Caco-2 (cell line): ENCODE measurements at regions of chr17 and their contacts with region 1.

Region 1: DNA sequence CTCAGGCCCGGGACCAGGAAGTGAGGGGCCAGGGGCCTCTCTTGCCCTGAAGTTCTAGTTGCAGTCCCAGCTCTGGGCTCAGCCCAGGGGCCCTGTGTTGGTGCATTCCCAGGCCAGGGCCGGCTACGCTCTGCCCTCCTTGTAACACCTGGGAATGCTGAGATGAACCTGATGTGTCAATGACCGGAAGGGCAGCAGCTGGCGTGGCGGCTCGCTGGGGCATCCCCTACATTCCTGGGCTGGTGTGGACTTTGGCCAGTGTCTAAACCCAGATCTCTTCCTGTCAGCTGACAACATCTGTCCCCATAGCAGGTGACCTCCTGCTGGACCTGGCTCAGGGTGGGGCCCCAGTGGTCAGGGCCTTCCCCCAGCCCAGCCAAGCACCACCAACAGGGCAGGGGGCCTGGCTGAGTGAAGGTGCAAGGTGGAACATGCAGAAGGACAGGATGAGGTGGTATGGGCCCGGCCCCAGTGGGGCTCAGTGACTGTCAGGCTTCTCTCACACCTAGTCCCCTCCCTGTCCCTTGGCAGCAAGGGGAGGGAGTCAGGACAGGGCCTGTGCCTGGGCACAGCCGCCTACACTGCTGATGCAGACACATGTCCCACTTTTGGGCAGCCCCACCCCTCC is 15.9 kb downstream of the FAM83G start:
- DNase-seq: peak; percentile 84 to 89
- H3K4me3 ChIP-seq: no peak overlapping the region
- H3K4me3 Mint-ChIP-seq: no peak overlapping the region
- H3K27ac Mint-ChIP-seq: peak overlapping the region; percentile 80
- H3K4me1 ChIP-seq: peaks cover 37% of the 10 kb centered on the region
- H3K4me1 Mint-ChIP-seq: peaks cover 16% of the 10 kb centered on the region
- H3K27me3 ChIP-seq: no peaks in the 10 kb centered on the region
- H3K27me3 Mint-ChIP-seq: no peaks in the 10 kb centered on the region
- CTCF ChIP-seq: no peak

Region 2: DNA sequence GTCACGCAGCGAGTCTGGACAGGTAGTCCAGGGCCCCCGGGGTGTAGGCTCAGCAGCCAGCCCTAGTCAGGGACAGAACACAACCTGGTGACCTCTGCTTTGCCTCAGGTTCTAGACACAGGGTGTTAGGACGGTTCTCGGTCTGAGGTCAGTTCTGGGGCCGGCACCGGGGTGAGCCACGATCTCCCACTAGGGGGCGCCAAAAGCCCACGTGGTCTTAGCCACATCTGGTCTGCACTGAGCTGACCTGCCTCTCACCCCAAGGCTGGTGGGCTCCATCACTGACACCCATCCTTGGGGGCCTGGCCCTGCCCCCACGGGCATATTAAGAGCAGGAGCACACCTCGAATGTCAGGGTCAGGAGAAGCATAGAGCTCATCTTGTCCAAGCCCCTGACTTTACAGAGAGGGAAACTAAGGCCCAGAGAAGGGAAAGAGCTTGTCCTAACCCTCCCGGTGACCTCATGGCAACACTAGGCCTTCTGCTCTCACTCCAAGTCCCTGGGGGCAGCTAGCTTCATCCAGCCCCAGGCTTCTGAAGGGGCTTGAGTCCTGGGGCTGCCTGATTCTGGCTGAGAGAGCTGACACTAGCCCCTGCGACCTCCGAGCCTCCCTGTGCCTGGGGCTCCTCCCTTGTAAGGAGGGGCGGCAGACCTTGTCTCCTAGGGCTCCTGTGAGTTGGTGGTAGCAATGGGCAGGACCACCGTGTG is 27.7 kb before region 1 on chr17:
- CTCF ChIA-PET with region 1: interaction called, 11 read pairs
- POLR2A ChIA-PET with region 1: no interaction called
- intact Hi-C with region 1: loop called (anchors 2 kb)
- DNase-seq: peak; percentile 82 to 92
- H3K4me3 ChIP-seq: no peak overlapping the region
- H3K4me3 Mint-ChIP-seq: no peak overlapping the region
- H3K27ac Mint-ChIP-seq: no peak overlapping the region
- H3K4me1 ChIP-seq: peaks cover 20% of the 10 kb centered on the region
- H3K4me1 Mint-ChIP-seq: peaks cover 11% of the 10 kb centered on the region
- H3K27me3 ChIP-seq: no peaks in the 10 kb centered on the region
- H3K27me3 Mint-ChIP-seq: no peaks in the 10 kb centered on the region
- CTCF ChIP-seq: peak; percentile 96 to 97

Region 3: DNA sequence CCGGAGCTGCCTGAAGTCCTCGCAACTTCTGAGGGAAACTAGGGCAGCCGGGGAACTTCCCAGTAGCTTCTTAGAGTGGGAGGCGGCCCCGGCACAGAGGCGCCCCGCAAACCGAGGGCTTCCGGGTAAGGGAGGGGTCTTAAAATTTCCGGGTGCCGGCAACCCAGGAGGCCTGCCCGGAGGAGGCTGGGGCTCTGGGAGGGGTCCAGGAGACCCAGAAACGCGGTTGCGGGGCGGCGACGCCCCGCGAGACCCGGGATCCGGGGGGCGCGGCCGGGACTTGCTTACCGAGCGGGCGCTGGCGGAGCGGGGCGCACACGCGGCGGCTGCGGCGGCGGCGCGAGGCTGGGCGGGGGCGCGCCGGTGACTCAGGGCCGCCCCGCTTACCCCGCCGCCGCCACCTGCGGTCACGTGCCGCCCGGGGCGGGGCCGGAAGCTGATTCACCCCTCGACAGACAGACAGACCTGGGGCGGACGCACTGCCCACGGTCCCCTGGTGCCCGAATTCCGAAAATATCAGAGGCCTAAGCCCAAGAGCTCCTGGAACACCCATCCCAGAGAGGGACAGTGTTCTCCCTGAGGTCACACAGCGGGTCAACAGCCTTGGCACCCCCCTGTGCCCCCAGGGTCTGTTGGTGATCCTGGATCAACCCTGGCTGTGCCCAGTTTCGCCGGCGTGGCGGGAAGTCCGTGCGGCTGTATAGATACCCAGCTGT is 15.9 kb after region 1 on chr17 and contains the start of gene FAM83G:
- CTCF ChIA-PET with region 1: no interaction called
- POLR2A ChIA-PET with region 1: interaction called, 3 read pairs
- intact Hi-C with region 1: loop called (anchors 1 kb)
- DNase-seq: peak; percentile 82 to 89
- H3K4me3 ChIP-seq: peak within 1 kb of the TSS; percentile 93
- H3K4me3 Mint-ChIP-seq: peak within 1 kb of the TSS; percentile 75
- H3K27ac Mint-ChIP-seq: peak within 1 kb of the TSS; percentile 58
- H3K4me1 ChIP-seq: peaks cover 27% of the 10 kb centered on the region
- H3K4me1 Mint-ChIP-seq: peaks cover 7% of the 10 kb centered on the region
- H3K27me3 ChIP-seq: no peaks in the 10 kb centered on the region
- H3K27me3 Mint-ChIP-seq: no peaks in the 10 kb centered on the region
- CTCF ChIP-seq: no peak
- total RNA-seq, gene FAM83G: 24.3 and 28.1 TPM in 2 replicates

Region 4: DNA sequence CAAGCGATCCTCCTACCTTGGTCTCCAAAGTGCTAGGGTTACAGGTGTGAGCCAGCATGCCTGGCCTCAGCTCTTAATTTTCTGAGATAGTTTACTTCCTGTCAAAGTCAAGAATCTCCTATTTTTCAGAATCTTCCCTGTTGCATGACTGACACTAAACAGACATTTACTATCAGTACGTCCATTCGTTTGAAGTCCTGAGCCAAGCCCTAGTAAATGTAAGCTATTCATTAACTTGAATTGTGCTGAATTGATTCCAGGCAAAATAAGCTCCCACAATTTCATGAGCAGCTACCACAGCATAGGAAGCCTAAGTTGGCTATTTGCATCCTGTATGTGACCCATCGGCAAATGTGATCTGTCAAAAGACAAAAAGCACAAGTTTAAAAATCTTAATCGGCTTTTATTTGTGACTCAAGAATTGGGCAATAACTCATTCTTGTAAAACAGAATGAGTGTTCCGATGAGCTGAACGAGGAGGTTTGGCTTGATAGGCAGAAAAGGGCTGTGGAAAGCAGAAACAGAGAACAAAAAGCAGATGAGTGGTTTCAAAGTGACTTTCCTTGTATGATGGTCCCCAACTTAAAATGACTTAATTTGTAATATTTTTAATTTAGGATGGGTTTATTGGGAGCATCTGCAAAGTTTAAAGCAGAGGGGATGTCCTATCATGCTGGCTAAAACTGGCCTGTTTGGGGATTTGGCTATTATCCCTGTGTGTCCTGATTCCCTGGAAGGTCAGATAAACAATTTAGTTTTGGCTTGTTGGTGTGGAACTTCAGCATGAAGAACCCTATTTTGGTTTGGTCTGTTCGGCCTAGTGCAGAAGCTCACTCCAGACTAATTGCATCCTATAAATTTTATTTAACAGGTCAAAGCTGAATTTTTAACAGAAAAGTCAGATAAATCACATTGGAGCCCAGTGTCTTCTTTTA is 436.5 kb after region 1 on chr17:
- CTCF ChIA-PET with region 1: no interaction called
- POLR2A ChIA-PET with region 1: no interaction called
- intact Hi-C with region 1: no loop called
- DNase-seq: no peak
- H3K4me3 ChIP-seq: no peak overlapping the region
- H3K4me3 Mint-ChIP-seq: no peak overlapping the region
- H3K27ac Mint-ChIP-seq: no peak overlapping the region
- H3K4me1 ChIP-seq: peaks cover 7% of the 10 kb centered on the region; the same call in 1 of the 2 replicates
- H3K4me1 Mint-ChIP-seq: peaks cover 12% of the 10 kb centered on the region
- H3K27me3 ChIP-seq: no peaks in the 10 kb centered on the region
- H3K27me3 Mint-ChIP-seq: no peaks in the 10 kb centered on the region
- CTCF ChIP-seq: no peak